ENCODE measurements at regions of chr12 and their contacts with region 1.

Region 1: DNA sequence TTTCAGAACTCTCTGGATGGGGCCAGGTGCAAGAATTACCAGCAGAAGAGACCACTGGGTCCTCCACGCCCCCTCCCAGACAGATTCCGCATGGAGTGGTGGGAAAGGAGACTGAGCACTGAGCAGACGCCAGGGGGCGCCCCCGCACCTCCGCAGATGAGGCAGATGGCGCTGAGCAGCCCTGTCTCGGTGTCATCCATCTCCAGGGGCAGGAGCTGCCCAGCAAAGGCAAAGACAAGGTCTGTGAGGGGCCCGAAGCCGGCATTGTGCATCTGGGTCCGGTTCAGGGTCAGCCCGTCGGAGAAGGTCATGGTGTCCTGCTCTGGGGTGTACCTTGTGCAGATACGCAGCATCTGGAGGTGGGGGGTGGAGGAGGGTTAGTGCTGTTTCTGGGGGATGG is 6.3 kb upstream of the ITGB7 start:
- DNase-seq: peak; percentile 91
- H3K4me3 ChIP-seq: no peak overlapping the region
- H3K27ac ChIP-seq: peak overlapping the region in 2 of 4 donors; percentile 25 to 26
- H3K4me1 ChIP-seq: peaks cover 0 to 59% (median 51%) of the 10 kb centered on the region in 4 donors
- H3K27me3 ChIP-seq: no peaks in the 10 kb centered on the region
- CTCF ChIP-seq: peak; percentile 94 to 97 (median 97)
- EP300 ChIP-seq: no peak
- POLR2A ChIP-seq: no peak

Region 2: GRCh38 chr12:53267999-53268647 is 54.8 kb after region 1 on chr12 and contains the start of gene ESPL1:
- intact Hi-C with region 1: loop called (anchors 1 kb)
- DNase-seq: peak; percentile 86
- H3K4me3 ChIP-seq: peak within 1 kb of the TSS; percentile 38 to 60 (median 56)
- H3K27ac ChIP-seq: peak within 1 kb of the TSS in 3 of 4 donors; percentile 35 to 63 (median 61)
- H3K4me1 ChIP-seq: peaks cover 0 to 15% (median 8%) of the 10 kb centered on the region in 4 donors
- H3K27me3 ChIP-seq: no peaks in the 10 kb centered on the region
- CTCF ChIP-seq: peak in 2 of 4 experiments; percentile 18 to 26
- EP300 ChIP-seq: no peak
- POLR2A ChIP-seq: no peak
- total RNA-seq, gene ESPL1: under 0.01 to 1.9 (median 0.22) TPM

Region 3: DNA sequence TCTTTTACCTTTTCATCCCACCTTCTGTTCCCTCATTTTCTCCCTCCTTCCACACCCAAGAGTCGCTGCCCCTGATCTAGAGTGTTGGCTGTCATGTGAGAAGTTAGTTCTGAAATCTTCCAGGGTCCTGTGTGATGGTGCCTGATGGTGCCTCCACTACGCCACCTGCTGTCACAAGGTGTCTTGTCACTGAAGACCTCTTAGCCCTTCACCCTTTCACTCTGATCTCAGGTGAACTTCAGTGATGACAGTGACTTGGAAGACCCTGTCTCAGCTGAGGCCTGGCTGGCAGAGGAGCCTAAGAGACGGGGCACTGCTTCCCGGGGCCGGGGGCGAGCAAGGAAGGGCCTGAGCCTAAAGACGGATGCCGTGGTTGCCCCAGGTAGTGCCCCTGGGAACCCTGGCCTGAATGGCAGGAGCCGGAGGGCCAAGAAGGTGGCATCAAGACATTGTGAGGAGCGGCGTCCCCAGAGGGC is 74.4 kb after region 1 on chr12:
- intact Hi-C with region 1: loop called (anchors 1 kb)
- DNase-seq: peak; percentile 81
- H3K4me3 ChIP-seq: no peak overlapping the region
- H3K27ac ChIP-seq: no peak overlapping the region
- H3K4me1 ChIP-seq: peaks cover 0 to 4% (median 0%) of the 10 kb centered on the region in 4 donors
- H3K27me3 ChIP-seq: no peaks in the 10 kb centered on the region
- CTCF ChIP-seq: peak; percentile 39 to 73 (median 60)
- EP300 ChIP-seq: no peak
- POLR2A ChIP-seq: no peak

Region 4: DNA sequence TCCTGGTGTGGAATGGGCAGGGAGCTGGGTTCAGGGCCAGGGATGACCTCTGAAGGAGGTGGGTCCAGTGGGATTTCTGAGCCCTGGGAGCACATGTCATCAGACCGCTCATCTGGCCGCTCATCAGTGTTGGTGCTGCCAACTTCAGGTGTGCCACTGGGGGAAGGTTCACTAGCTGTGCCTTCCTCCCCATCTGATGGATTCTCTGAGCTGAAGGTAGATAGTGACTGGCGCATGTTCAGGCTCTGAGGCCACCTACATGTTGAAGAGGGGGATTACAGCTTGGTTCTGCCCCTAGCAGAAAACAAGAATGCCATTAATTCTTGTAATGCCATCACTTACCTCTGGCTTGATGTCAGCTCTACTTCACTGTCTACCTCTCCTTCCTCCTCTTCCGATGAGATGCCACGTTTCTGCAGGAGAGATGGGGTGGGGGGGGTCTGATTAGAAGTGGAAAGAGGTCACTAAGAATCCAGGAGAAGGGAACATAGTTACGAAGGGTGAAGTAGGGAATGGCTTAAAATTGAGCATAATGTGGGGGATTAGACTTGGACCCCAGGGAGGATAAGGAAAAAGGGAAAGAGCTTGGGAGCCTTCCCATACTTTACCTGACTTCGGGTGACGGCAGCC is 268.7 kb after region 1 on chr12:
- intact Hi-C with region 1: no loop called
- DNase-seq: peak; percentile 68
- H3K4me3 ChIP-seq: no peak overlapping the region
- H3K27ac ChIP-seq: peak overlapping the region; percentile 6 to 35 (median 16)
- H3K4me1 ChIP-seq: peaks cover 0 to 14% (median 5%) of the 10 kb centered on the region in 4 donors
- H3K27me3 ChIP-seq: no peaks in the 10 kb centered on the region
- CTCF ChIP-seq: peak in 1 of 4 experiments; percentile 7
- EP300 ChIP-seq: no peak
- POLR2A ChIP-seq: no peak